MCF 10A (cell line): ENCODE measurements at regions of chr2 and their contacts with region 1.

Region 1: DNA sequence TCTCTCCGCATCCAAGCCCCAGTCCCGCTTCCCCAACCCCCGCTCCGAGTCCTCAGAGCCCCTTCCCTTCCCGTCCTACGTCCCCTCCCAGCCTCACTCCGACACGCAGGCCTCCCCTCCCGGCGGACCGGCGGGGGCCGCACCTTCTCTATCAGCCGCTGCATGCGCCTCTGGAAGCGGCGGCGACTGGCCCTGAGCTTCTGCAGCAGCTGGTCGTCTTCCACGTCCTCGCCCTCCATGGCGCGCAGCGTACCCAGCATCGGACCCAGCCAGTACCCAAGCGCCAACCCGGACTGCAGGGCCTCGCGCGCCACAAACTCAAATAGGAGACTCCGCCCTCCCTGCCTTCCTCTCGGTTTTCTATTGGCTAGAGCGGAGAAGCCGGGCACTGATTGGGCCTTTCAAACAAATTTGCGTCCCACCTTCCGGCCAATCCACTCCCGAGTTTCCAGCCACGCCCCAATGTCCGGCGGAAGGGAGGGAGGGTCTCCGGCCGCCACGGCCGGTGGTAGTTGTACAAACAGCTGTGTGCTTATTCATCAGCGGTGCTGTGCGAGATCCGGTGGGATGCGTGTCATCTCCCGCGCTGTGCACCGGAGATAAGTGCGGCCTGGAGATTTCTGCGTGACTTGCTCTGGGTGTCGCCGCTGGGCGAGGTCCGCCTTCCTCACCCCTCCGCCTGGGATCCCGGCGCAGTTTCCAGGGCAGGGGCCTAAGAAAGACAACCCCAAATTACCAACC is at the start of gene HJURP:
- DNase-seq: peak; percentile 97
- H3K4me3 Mint-ChIP-seq: peak within 1 kb of the TSS; percentile 90
- H3K27ac Mint-ChIP-seq: peak within 1 kb of the TSS; percentile 87
- H3K4me1 Mint-ChIP-seq: peaks cover 16% of the 10 kb centered on the region
- H3K27me3 Mint-ChIP-seq: no peaks in the 10 kb centered on the region
- CTCF ChIP-seq: no peak
- total RNA-seq, gene HJURP: 12.7 and 29.3 TPM in 2 replicates

Region 2: DNA sequence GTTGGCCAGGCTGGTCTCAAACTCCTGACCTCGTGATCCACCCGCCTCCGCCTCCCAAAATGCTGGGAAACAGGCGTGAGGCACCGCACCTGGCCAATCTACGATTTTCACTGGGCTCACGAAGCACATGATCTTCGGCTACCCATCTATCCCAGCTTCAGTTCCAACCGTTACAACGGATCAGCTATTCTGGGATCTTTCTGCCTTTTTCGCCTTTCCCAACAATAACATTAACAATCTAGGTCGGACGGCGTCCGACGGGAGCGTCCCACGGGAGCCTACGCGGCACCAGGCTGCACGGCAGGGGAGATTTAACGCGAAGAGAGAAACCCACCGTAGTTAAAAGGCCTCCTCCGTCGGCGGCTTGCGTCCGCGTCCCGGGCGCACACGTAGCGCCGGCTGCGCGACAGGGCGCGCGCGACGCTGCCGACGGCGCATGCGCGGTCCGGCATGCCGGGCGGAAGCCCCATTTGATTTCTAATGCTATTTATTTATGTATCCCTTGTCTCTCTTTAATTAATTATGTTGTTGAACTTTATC is 13.7 kb after region 1 on chr2 and contains the start of gene MSL3B:
- CTCF ChIA-PET with region 1: interaction called, 11 read pairs
- POLR2A ChIA-PET with region 1: interaction called, 3 read pairs
- intact Hi-C with region 1: no loop called
- DNase-seq: peak; percentile 28
- H3K4me3 Mint-ChIP-seq: peak within 1 kb of the TSS; percentile 72
- H3K27ac Mint-ChIP-seq: peak within 1 kb of the TSS; percentile 73
- H3K4me1 Mint-ChIP-seq: no peaks in the 10 kb centered on the region
- H3K27me3 Mint-ChIP-seq: peaks cover 16% of the 10 kb centered on the region
- CTCF ChIP-seq: no peak

Region 3: GRCh38 chr2:234111523-234111922 is 257.1 kb after region 1 on chr2:
- CTCF ChIA-PET with region 1: no interaction called
- POLR2A ChIA-PET with region 1: no interaction called
- intact Hi-C with region 1: no loop called
- DNase-seq: peak; percentile 82
- H3K4me3 Mint-ChIP-seq: no peak overlapping the region
- H3K27ac Mint-ChIP-seq: no peak overlapping the region
- H3K4me1 Mint-ChIP-seq: peaks cover 25% of the 10 kb centered on the region
- H3K27me3 Mint-ChIP-seq: no peaks in the 10 kb centered on the region
- CTCF ChIP-seq: no peak